HepG2 (cell line): ENCODE measurements at regions of chr4 and their contacts with region 1.

Region 1: GRCh38 chr4:151325111-151325948 is at the start of gene SH3D19:
- DNase-seq: peak; percentile 99
- ATAC-seq: peak; percentile 89
- H3K4me3 ChIP-seq: peak within 1 kb of the TSS; percentile 80 to 84 (median 83)
- H3K27ac ChIP-seq: peak within 1 kb of the TSS; percentile 100
- H3K4me1 ChIP-seq: peaks cover 59% of the 10 kb centered on the region
- H3K27me3 ChIP-seq: no peaks in the 10 kb centered on the region
- CTCF ChIP-seq: no peak; the same call in 1 of the 2 replicates
- EP300 ChIP-seq: peak in 1 of 2 experiments; percentile 77; a peak in 2 of 4 replicates
- POLR2A ChIP-seq: peak; percentile 71 to 83
- RAD21 ChIP-seq: peak; percentile 27
- total RNA-seq, gene SH3D19: 31.2 and 34.4 TPM in 2 replicates

Region 2: DNA sequence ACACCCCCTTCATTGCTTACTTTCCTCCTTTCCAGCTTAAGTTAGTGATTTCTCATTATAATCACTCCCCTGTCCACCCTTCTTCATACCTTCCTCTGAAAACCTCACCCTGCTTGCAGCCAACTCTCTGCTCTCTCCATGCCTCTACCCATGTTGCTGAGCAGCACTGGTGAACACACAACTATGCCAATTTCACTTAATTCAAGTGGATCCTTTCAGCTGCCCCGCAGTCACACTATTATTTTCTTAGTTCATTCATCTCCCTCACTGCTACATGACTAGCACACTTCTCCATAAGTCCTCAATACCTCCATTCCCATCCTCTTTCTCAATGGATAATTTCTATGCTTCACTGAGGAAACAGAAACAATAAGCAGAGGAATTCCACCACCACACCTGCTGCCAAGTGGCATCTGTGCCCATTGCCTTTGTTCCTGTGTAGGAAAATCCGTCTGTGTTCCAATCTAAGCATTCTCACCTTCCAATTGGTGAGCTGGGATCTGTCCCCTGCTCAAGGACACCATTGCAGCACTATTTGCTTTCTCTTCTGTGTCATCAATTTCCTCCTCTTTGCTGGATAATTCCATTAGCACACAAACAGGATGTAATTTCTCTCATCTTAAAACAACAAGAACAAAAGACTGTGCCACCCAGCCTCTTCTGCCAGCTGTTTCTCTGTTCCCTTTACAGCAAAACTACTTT is 73.6 kb before region 1 on chr4:
- CTCF ChIA-PET with region 1: no interaction called
- POLR2A ChIA-PET with region 1: interaction called, 21 read pairs
- in situ Hi-C with region 1: no loop called
- intact Hi-C with region 1: no loop called
- DNase-seq: peak; percentile 91
- ATAC-seq: peak; percentile 94
- H3K4me3 ChIP-seq: peak overlapping the region in 1 of 3 experiments; percentile 24; a peak in 1 of 6 replicates
- H3K27ac ChIP-seq: peak overlapping the region; percentile 79
- H3K4me1 ChIP-seq: peaks cover 78% of the 10 kb centered on the region
- H3K27me3 ChIP-seq: no peaks in the 10 kb centered on the region
- CTCF ChIP-seq: no peak
- EP300 ChIP-seq: peak; percentile 56 to 89; a peak in 2 of 4 replicates
- POLR2A ChIP-seq: peak; percentile 47 to 49; a peak in 2 of 4 replicates
- RAD21 ChIP-seq: no peak

Region 3: GRCh38 chr4:151276787-151277562 is 48.4 kb before region 1 on chr4 and contains the start of gene PRSS48:
- CTCF ChIA-PET with region 1: no interaction called
- POLR2A ChIA-PET with region 1: interaction called, 23 read pairs
- in situ Hi-C with region 1: no loop called
- intact Hi-C with region 1: loop called (anchors 5 kb)
- DNase-seq: peak; percentile 55
- ATAC-seq: peak; percentile 89
- H3K4me3 ChIP-seq: no peak within 1 kb of the TSS
- H3K27ac ChIP-seq: no peak within 1 kb of the TSS
- H3K4me1 ChIP-seq: peaks cover 39% of the 10 kb centered on the region
- H3K27me3 ChIP-seq: no peaks in the 10 kb centered on the region
- CTCF ChIP-seq: peak; percentile 87
- EP300 ChIP-seq: no peak
- POLR2A ChIP-seq: no peak
- RAD21 ChIP-seq: peak; percentile 90
- total RNA-seq, gene PRSS48: not detected in 2 replicates

Region 4: DNA sequence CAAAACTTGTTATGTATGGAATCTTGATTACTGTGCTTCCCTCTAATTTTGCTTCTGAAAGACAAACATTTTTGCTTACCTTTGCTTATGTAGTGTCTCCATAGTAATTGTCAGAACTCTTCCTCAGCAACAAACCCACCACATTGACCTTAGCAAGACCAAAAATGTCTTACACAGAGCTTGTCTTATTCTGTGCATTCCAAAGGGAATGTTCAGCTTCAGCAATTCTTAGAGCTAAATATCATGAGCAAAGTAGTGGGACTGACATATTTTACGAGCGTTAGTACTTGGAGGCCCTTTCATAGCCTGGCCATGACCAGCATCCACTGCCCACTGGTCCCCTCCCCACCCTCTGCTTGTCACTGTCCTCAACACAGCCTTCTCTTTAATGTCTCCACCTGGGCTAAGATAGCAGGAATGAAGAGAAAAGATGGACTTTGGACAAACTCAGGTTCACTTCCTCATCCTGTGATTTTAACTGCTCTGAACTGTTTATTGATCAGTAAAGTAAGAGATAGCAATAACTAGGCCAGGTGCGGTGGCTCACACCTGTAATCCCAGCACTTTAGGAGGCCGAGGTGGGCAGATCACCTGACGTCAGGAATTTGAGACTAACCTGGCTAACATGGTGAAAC is 15.5 kb after region 1 on chr4:
- CTCF ChIA-PET with region 1: no interaction called
- POLR2A ChIA-PET with region 1: interaction called, 49 read pairs
- in situ Hi-C with region 1: no loop called
- intact Hi-C with region 1: no loop called
- DNase-seq: no peak
- ATAC-seq: peak; percentile 81
- H3K4me3 ChIP-seq: no peak overlapping the region; a peak in 1 of 6 replicates
- H3K27ac ChIP-seq: no peak overlapping the region
- H3K4me1 ChIP-seq: peaks cover 48% of the 10 kb centered on the region
- H3K27me3 ChIP-seq: no peaks in the 10 kb centered on the region
- CTCF ChIP-seq: no peak
- EP300 ChIP-seq: no peak
- POLR2A ChIP-seq: no peak
- RAD21 ChIP-seq: no peak

Region 5: DNA sequence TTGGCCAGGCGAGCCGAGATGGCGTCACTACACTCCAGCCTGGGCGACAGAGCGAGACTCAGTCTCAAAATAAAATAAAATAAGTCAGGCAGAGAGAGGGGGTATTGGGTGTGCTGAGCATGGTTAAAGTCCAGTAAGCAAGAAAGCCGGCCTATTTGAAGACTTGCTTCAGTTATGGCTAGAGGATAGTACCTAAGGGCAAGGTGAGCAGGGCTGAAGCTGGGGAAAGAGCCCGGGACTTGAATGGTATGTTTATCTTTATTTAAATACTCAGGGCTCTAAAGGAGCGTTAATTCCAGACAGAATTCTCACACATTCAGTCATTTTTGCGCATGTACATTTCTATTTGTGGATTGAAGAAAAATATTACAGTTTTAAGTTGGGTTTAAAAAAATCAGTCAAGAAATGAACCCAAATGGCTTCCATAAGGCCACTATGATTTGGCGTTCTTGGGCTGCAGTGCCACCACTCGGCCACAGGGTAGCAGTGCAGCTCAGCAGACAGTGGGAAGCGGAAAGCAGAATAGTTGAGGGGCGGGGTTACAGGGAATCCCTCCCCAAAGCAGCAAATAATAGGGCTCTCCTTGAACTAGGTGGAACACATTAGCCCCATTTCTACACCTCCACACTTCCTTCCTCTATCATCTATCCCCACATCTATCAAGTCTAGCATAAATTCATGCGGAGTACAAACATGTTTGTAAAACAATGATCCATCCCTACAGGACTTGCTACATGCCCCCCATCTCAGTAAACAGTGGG is 37.3 kb after region 1 on chr4:
- CTCF ChIA-PET with region 1: no interaction called
- POLR2A ChIA-PET with region 1: interaction called, 11 read pairs
- in situ Hi-C with region 1: no loop called
- intact Hi-C with region 1: loop called (anchors 1 kb)
- DNase-seq: peak; percentile 80
- ATAC-seq: peak; percentile 99
- H3K4me3 ChIP-seq: peak overlapping the region in 1 of 3 experiments; percentile 5; a peak in 1 of 6 replicates
- H3K27ac ChIP-seq: no peak overlapping the region
- H3K4me1 ChIP-seq: peaks cover 23% of the 10 kb centered on the region
- H3K27me3 ChIP-seq: no peaks in the 10 kb centered on the region; a peak in 1 of 5 replicates
- CTCF ChIP-seq: peak; percentile 97
- EP300 ChIP-seq: no peak
- POLR2A ChIP-seq: no peak
- RAD21 ChIP-seq: peak; percentile 94